ENCODE measurements at regions of chr6 and their contacts with region 1.

Region 1: GRCh38 chr6:70706491-70707123 is 38.9 kb downstream of the SMAP1 start:
- DNase-seq: peak; percentile 59
- H3K4me3 ChIP-seq: no peak overlapping the region
- H3K27ac ChIP-seq: no peak overlapping the region
- H3K4me1 ChIP-seq: peaks cover 5% of the 10 kb centered on the region
- H3K27me3 ChIP-seq: no peaks in the 10 kb centered on the region
- CTCF ChIP-seq: peak; percentile 70

Region 2: DNA sequence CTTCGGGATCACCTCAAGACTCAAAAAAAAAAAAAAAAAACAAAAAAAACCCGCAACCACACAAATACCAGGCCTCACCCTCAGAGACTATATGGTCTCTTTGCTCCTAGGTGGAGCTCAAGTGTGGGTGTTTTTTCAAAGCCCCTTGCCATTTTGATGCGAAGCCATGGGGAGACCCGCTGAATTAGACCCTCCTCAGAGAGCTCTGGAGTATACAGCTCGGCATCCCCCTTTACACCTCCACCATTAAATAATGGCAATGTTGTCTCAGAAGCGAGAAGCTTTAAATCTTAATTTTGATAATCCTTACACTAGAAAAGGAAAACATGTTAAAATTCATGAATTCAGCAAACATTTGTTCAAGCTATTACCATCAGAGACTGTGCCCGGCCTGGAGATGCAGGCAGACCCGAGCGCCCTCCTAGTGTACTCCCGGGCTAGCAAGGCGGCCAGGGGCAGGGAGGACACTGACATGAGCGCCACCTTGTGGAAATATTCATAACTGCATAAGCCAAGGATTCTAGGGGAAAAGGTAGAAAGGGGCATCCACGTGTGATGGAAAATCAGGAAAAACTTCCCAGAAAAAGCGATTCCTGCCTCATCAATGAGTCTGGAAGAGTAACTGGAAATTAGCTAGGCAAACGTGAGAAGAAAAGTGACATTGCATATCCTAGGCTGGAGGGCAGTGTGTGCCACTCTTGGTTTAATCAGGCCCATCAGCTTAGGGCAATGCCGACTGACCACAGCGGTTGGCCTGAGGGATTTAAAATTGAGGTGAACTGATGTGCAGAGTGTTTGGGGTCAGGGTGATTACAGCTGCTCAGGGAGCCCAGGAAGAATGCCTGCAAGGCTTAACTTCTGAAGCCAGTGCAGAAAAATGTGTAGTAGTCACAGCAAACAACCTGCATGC is 177.7 kb after region 1 on chr6:
- CTCF ChIA-PET with region 1: interaction called, 10 read pairs
- POLR2A ChIA-PET with region 1: no interaction called
- intact Hi-C with region 1: loop called (anchors 1 kb)
- DNase-seq: peak; percentile 72
- H3K4me3 ChIP-seq: no peak overlapping the region
- H3K27ac ChIP-seq: no peak overlapping the region
- H3K4me1 ChIP-seq: no peaks in the 10 kb centered on the region
- H3K27me3 ChIP-seq: no peaks in the 10 kb centered on the region
- CTCF ChIP-seq: peak; percentile 92

Region 3: DNA sequence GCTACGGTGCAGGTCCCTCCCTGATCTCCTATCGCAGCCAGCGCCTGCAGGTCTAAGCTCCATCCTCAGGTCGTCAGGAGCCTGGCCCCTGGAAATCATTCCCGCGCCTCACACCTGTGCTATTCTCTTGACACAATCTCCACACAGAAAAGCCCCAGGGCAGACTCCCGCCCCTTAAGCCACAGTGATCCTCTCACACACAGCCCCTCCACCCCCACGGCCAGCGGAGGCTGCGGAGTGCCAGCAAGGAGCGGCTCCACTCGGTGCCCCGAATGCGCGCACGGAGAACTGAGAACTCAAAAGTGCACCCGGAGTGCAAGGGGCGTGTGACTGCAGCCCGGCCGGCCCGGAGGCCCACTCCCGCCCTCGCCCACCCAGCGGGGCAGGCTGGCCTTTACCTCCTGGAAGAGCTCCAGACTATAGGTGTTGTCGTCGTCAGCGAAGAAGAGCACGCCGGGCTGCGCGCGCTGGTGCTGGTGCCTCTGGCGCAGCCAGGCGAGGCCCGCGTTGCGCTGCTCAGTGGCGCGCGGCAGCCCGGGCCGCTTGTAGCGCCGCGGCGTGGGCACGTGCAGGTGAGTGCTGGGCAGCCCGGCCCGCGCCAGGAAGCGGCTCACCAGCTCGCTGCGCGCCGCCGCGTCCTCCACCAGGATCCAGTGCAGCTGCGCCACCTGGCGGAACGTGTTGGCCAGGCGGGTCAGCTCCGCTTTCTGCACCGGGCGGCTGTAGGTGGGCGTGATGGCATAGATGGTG is 249.0 kb after region 1 on chr6:
- CTCF ChIA-PET with region 1: interaction called, 6 read pairs
- POLR2A ChIA-PET with region 1: no interaction called
- intact Hi-C with region 1: loop called (anchors 1 kb)
- DNase-seq: peak; percentile 82
- H3K4me3 ChIP-seq: peak overlapping the region; percentile 45
- H3K27ac ChIP-seq: no peak overlapping the region
- H3K4me1 ChIP-seq: no peaks in the 10 kb centered on the region
- H3K27me3 ChIP-seq: peaks cover 80% of the 10 kb centered on the region
- CTCF ChIP-seq: peak; percentile 87

Region 4: GRCh38 chr6:71349395-71349794 is 642.8 kb after region 1 on chr6:
- CTCF ChIA-PET with region 1: no interaction called
- POLR2A ChIA-PET with region 1: no interaction called
- intact Hi-C with region 1: loop called (anchors 10 kb)
- DNase-seq: peak; percentile 52
- H3K4me3 ChIP-seq: no peak overlapping the region
- H3K27ac ChIP-seq: no peak overlapping the region
- H3K4me1 ChIP-seq: no peaks in the 10 kb centered on the region
- H3K27me3 ChIP-seq: no peaks in the 10 kb centered on the region
- CTCF ChIP-seq: peak; percentile 72

Region 5: DNA sequence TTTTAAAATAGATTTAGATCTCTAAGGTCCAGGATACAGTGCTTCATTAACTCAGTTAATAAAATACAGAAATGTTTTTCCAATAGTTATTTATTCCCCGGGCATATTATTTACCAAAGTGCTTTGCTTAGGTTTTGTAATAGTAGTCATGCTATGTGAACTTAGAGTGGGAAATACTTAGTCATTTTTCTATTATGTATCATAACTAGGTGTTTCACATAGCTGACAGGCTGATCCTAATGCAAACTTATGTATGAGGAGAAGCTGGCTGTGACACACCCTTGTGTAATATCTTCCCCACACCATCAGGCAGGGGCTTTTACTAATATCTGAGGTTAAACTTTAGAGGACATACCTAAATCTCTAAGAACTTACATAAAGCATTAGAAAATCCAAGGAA is 902.0 kb after region 1 on chr6:
- CTCF ChIA-PET with region 1: no interaction called
- POLR2A ChIA-PET with region 1: no interaction called
- intact Hi-C with region 1: no loop called
- DNase-seq: no peak
- H3K4me3 ChIP-seq: no peak overlapping the region
- H3K27ac ChIP-seq: no peak overlapping the region
- H3K4me1 ChIP-seq: no peaks in the 10 kb centered on the region
- H3K27me3 ChIP-seq: no peaks in the 10 kb centered on the region
- CTCF ChIP-seq: no peak